Esophagus muscularis mucosa (tissue), 4 donors: ENCODE measurements at regions of chr6 and their contacts with region 1.

Region 1: DNA sequence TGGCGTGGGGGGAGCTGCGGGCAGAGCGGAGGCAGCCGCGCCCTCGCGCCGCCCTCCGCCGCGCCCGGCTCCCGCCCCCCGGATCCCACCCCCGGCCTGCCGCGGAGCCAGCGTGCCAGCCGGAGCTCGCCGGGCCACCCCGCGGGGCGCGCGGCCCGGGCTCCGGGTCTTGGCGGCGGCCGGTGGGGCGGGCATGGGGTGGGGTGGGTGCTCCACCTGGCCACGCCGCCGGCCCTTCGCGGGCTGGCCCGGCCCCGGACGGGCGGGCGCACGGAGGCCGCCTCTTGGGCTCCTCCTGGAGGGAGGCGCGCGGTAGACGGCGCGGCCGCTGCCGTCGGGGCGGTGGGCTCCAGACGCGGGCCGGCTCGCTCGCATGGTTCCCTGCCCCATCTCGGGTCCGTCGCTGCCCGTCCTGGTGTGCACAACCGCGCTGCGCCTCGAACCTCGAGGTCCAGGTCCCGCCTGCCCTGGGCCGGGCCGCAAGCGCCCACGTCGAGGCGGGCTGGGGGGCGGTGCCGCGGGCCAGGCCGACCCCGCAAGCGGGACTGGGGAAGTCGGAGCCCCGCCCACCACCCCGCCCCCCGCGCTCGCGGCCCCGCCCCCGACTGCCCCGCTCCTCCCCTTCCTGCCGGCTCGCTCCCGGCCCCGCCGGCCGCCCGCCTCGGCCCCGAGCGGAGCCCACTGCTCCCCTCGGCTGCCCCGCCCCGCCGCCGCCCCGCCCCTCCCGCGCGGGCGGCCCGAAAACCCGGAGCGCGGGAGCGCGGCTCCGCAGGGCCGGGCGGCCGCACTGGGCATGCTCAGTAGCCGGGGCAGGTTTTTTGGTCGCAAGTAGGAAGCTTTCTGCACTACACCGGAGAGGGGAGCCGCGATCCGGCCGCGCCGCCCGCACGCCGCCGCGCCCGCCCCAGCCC is at the start of gene CDYL:
- DNase-seq: peak; percentile 93
- H3K4me3 ChIP-seq: peak within 1 kb of the TSS; percentile 68 to 94 (median 72)
- H3K27ac ChIP-seq: peak within 1 kb of the TSS; percentile 86 to 90 (median 86)
- H3K4me1 ChIP-seq: peaks cover 12 to 41% (median 28%) of the 10 kb centered on the region in 4 donors
- H3K27me3 ChIP-seq: no peaks in the 10 kb centered on the region
- CTCF ChIP-seq: peak in 2 of 3 experiments; percentile 27 to 46
- EP300 ChIP-seq: no peak
- POLR2A ChIP-seq: no peak
- total RNA-seq, gene CDYL: 41.9 to 52.3 (median 45.7) TPM

Region 2: GRCh38 chr6:4358414-4359114 is 417.3 kb before region 1 on chr6:
- intact Hi-C with region 1: loop called (anchors 10 kb)
- DNase-seq: peak; percentile 96
- H3K4me3 ChIP-seq: peak overlapping the region in 1 of 4 donors; percentile 18
- H3K27ac ChIP-seq: peak overlapping the region; percentile 79 to 86 (median 84)
- H3K4me1 ChIP-seq: peaks cover 13 to 22% (median 19%) of the 10 kb centered on the region in 4 donors
- H3K27me3 ChIP-seq: no peaks in the 10 kb centered on the region
- CTCF ChIP-seq: no peak
- EP300 ChIP-seq: peak; percentile 84
- POLR2A ChIP-seq: no peak

Region 3: GRCh38 chr6:4647414-4648365 is 128.1 kb before region 1 on chr6:
- intact Hi-C with region 1: loop called (anchors 5 kb)
- DNase-seq: peak; percentile 92
- H3K4me3 ChIP-seq: peak overlapping the region; percentile 41 to 50 (median 48)
- H3K27ac ChIP-seq: peak overlapping the region in 3 of 4 donors; percentile 54 to 57 (median 54)
- H3K4me1 ChIP-seq: peaks cover 8 to 15% (median 13%) of the 10 kb centered on the region in 4 donors
- H3K27me3 ChIP-seq: no peaks in the 10 kb centered on the region
- CTCF ChIP-seq: no peak
- EP300 ChIP-seq: no peak
- POLR2A ChIP-seq: no peak

Region 4: DNA sequence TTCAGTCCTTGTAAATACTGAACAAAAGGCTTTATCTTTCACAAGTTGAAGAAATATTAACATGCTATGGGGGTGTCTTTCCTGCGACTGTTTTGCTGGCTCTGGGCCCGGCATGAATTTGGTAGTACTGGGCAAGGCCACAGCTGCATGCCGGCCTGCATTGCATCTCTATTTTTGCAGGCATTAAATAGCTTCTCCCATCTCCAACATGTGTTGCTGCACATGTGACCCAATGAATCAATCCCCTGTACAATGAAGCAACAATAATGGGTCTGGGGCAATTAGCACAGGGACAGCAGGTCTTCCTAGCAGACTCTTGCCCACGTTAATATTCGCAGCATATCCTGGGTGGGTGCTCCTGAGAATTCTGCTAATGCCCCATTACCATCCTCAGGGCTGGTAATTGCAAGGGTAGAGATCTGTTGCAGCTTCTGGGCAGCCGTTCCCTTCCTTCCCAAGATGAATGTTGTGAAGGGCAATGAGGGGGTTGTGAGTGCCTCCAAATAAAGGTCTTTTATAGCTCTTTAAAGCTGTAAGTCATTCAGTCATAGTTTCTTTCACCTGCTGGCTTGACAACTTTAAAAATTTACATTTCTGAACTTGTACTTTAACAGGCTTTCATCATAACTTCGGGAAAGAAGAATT is 23.9 kb before region 1 on chr6:
- intact Hi-C with region 1: no loop called
- DNase-seq: no peak
- H3K4me3 ChIP-seq: no peak overlapping the region
- H3K27ac ChIP-seq: no peak overlapping the region
- H3K4me1 ChIP-seq: no peaks in the 10 kb centered on the region
- H3K27me3 ChIP-seq: no peaks in the 10 kb centered on the region
- CTCF ChIP-seq: no peak
- EP300 ChIP-seq: no peak
- POLR2A ChIP-seq: no peak

Region 5: GRCh38 chr6:4936681-4937041 is 160.8 kb after region 1 on chr6:
- intact Hi-C with region 1: loop called (anchors 10 kb)
- DNase-seq: no peak
- H3K4me3 ChIP-seq: no peak overlapping the region
- H3K27ac ChIP-seq: no peak overlapping the region
- H3K4me1 ChIP-seq: peaks cover 10 to 32% (median 15%) of the 10 kb centered on the region in 4 donors
- H3K27me3 ChIP-seq: no peaks in the 10 kb centered on the region
- CTCF ChIP-seq: peak; percentile 45 to 55 (median 53)
- EP300 ChIP-seq: no peak
- POLR2A ChIP-seq: no peak

Region 6: GRCh38 chr6:5003604-5004372 is 227.9 kb after region 1 on chr6 and contains the start of gene RPP40:
- intact Hi-C with region 1: loop called (anchors 10 kb)
- DNase-seq: peak; percentile 99
- H3K4me3 ChIP-seq: peak within 1 kb of the TSS; percentile 66 to 77 (median 70)
- H3K27ac ChIP-seq: peak within 1 kb of the TSS; percentile 88 to 93 (median 92)
- H3K4me1 ChIP-seq: peaks cover 7 to 10% (median 8%) of the 10 kb centered on the region in 4 donors
- H3K27me3 ChIP-seq: no peaks in the 10 kb centered on the region
- CTCF ChIP-seq: peak; percentile 69 to 97 (median 81)
- EP300 ChIP-seq: no peak
- POLR2A ChIP-seq: no peak
- total RNA-seq, gene RPP40: 2.5 to 7.9 (median 3.8) TPM